Calu3 (cell line): ENCODE measurements at regions of chr7 and their contacts with region 1.

Region 1: DNA sequence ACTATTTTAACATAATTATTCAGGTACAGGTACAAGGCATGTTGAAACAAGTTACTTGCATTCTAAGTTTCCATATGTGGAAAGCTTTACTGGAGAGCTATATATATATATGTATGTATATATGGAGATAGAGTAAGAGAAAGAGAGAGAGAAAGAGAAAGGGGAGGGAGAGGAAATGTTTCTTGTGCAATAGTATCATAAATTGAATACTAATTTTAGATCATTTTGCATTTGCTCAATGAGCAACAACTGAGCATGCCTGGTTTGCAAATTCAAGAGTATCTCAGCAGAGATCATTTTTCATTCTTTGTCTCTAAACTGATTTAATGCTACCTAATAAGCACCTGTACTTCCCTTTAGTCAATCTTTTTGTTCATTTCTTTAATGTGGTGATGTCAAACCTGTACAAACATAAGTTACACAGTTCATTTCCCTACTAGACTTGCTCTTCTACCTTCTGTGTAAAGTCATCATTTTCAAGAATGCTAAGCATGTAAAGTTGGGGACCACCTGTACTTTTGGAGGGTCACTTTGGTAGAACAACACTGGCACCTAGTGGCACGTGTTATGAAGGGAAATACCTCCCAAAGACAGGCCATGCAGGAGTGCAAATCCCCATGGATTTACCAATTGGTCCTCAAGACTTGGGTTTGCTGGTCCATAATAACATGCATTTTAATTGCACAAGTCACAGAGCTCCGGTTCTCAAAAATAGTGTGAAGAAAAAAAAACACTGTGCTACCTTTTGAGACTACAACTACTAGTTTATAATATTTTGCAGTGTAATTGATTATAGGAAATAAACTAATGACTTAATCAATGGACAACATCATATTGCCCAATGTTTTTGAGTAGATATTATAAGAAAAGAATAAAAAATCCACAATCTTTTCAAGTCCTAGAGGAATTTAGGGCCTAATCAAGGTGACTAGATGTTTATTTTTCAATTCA is 431.2 kb upstream of the IGFBP3 start:
- DNase-seq: peak; percentile 78
- H3K4me3 Mint-ChIP-seq: no peak overlapping the region
- H3K27ac Mint-ChIP-seq: peak overlapping the region; percentile 18
- H3K4me1 Mint-ChIP-seq: peaks cover 14% of the 10 kb centered on the region
- H3K27me3 Mint-ChIP-seq: no peaks in the 10 kb centered on the region
- CTCF ChIP-seq: peak; percentile 94

Region 2: GRCh38 chr7:45890902-45891461 is 461.3 kb before region 1 on chr7:
- CTCF ChIA-PET with region 1: no interaction called
- intact Hi-C with region 1: loop called (anchors 1 kb)
- DNase-seq: peak; percentile 36
- H3K4me3 Mint-ChIP-seq: no peak overlapping the region
- H3K27ac Mint-ChIP-seq: no peak overlapping the region
- H3K4me1 Mint-ChIP-seq: peaks cover 24% of the 10 kb centered on the region
- H3K27me3 Mint-ChIP-seq: no peaks in the 10 kb centered on the region
- CTCF ChIP-seq: no peak

Region 3: GRCh38 chr7:45917658-45918057 is 434.6 kb before region 1 on chr7:
- CTCF ChIA-PET with region 1: interaction called, 16 read pairs
- intact Hi-C with region 1: loop called (anchors 1 kb)
- DNase-seq: peak; percentile 97
- H3K4me3 Mint-ChIP-seq: peak overlapping the region; percentile 99
- H3K27ac Mint-ChIP-seq: peak overlapping the region; percentile 8
- H3K4me1 Mint-ChIP-seq: peaks cover 26% of the 10 kb centered on the region
- H3K27me3 Mint-ChIP-seq: no peaks in the 10 kb centered on the region
- CTCF ChIP-seq: peak; percentile 97

Region 4: DNA sequence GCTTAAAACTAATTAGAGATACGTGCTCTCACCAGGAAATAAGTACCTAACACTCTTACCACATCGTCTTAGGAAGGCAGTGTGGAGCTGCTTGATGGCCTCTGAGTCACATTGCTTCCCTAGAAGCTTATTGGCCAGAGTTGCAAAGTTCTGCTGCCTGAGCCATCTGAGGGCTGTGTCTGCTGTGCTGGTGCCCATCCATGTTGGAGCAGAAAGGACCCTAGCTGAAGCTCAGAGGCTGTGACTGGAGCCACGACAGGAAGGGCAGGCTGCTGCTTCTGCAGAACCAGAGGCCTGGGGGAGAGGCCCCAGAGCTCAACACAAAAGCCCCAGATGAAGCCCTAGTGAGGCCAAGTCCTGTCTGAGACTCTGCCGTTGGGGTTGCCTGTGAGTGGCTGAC is 366.4 kb before region 1 on chr7:
- CTCF ChIA-PET with region 1: interaction called, 3 read pairs
- intact Hi-C with region 1: loop called (anchors 1 kb)
- DNase-seq: peak; percentile 52
- H3K4me3 Mint-ChIP-seq: no peak overlapping the region
- H3K27ac Mint-ChIP-seq: peak overlapping the region; percentile 29
- H3K4me1 Mint-ChIP-seq: peaks cover 31% of the 10 kb centered on the region
- H3K27me3 Mint-ChIP-seq: no peaks in the 10 kb centered on the region
- CTCF ChIP-seq: no peak

Region 5: DNA sequence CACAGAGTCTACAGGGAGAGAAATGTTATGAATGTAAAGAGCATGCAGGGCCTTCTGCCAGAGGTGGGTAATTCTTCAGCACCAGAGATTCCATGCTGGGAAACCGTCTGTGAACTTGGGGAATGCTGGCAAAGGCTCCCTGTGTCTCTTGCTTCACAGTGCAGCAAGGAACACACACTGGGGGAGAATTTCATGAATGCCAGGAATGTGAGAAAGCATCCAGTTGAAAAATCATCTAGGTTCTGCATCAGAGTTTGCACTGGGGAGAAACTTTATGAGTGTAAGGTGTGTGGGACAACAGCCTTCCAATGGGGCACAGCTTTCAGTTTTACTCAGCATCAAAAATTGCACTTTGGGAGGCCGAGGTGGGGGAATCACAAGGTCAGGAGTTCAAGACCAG is 206.9 kb before region 1 on chr7:
- CTCF ChIA-PET with region 1: no interaction called
- intact Hi-C with region 1: loop called (anchors 5 kb)
- DNase-seq: peak; percentile 60
- H3K4me3 Mint-ChIP-seq: no peak overlapping the region
- H3K27ac Mint-ChIP-seq: peak overlapping the region; percentile 73
- H3K4me1 Mint-ChIP-seq: peaks cover 38% of the 10 kb centered on the region
- H3K27me3 Mint-ChIP-seq: no peaks in the 10 kb centered on the region
- CTCF ChIP-seq: no peak

Region 6: DNA sequence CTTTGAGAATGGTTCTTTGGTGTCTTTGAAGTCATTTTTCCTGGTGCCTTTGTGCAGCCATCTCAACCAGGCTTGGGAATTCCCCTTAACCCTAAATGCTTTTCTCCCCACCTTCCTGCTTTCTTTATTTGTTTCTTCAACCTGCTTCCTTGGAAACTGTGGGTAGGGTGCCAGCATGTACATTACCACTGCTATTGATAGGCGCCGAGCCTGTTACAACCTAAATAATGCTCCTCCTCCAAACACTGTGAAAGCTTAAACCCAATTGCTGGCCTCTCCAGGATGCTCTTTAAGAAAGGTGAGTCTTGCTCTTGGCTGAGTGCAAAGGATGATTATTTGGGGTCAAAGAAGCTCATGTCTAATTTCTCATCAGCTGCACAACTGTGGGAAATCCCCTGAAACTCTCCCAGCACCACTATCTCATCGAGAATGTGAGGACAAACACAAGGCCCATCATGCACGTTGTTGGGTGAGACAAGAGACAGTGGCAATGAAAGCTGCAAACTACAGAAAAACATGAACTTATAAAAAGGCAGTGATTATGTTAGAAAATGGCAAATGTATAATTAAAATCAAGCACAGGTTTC is 145.7 kb before region 1 on chr7:
- CTCF ChIA-PET with region 1: no interaction called
- intact Hi-C with region 1: loop called (anchors 2 kb)
- DNase-seq: peak; percentile 80
- H3K4me3 Mint-ChIP-seq: peak overlapping the region; percentile 19
- H3K27ac Mint-ChIP-seq: peak overlapping the region; percentile 97
- H3K4me1 Mint-ChIP-seq: peaks cover 70% of the 10 kb centered on the region
- H3K27me3 Mint-ChIP-seq: no peaks in the 10 kb centered on the region
- CTCF ChIP-seq: no peak

Region 7: DNA sequence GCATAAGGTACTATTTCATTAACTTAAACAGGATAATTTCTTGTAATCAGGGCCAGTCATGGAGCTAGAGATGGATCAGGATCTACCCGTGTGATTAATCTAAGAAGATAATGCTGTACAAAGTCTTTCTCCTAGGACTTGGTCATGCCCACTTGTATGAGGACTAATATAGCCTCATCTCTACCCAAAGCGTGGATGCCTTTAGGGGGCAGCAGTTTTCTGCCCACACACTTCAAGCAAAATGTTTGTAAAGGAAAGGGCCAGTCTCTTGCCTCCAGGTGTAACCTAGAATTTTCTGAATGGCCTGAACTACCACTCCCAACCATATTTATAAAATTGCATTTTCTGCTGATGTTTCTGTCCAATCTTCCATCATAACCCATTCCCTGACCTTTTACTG is 332.8 kb after region 1 on chr7:
- CTCF ChIA-PET with region 1: no interaction called
- intact Hi-C with region 1: no loop called
- DNase-seq: peak; percentile 14
- H3K4me3 Mint-ChIP-seq: no peak overlapping the region
- H3K27ac Mint-ChIP-seq: peak overlapping the region; percentile 46
- H3K4me1 Mint-ChIP-seq: peaks cover 19% of the 10 kb centered on the region
- H3K27me3 Mint-ChIP-seq: no peaks in the 10 kb centered on the region
- CTCF ChIP-seq: peak; percentile 25

Region 8: GRCh38 chr7:47179812-47180515 is 827.7 kb after region 1 on chr7:
- CTCF ChIA-PET with region 1: no interaction called
- intact Hi-C with region 1: loop called (anchors 2 kb)
- DNase-seq: peak; percentile 84
- H3K4me3 Mint-ChIP-seq: no peak overlapping the region
- H3K27ac Mint-ChIP-seq: no peak overlapping the region
- H3K4me1 Mint-ChIP-seq: peaks cover 21% of the 10 kb centered on the region
- H3K27me3 Mint-ChIP-seq: peaks cover 16% of the 10 kb centered on the region
- CTCF ChIP-seq: peak; percentile 89